Aorta (tissue), 5 donors: ENCODE measurements at regions of chr2 and their contacts with region 1.

Region 1: DNA sequence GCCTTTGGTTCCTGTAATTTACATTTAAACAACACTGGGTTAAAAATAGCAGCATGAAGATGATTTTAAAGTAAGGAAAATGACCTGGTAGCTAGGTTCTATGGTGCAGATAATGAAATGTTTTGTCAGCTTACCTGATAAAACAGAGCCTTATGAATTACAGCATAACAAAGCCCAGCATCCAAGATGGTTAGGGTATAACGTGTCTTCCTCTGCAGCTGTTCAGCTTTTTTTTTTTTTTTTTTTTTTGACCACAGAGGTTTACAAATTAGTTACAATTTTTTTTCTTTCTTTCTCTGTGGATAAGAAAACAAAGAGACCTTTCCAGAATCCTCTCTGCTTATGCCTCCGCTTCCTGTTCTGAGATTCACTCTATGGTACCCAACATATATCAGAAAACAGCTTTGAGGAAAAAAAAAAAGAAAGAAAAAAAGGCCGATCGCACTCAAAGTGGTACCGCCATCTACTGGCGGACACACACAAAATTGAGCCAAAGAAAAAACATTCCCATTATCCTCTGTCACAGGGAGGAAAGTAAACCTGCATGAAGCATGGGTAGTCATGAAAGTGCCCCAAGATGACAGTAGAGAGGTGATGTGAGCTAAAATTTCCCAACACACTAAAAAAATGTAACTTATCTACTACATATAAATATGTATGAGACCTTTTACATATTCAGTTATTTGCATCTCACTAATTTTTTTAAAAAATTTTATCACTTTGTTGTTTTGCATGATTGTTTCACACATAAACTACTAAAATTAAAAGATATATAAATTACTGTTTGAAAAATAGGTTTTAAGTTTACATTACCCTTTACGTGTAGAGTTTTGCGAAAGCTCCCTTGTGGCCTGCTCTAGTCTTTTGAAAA is at the start of gene SCN3A:
- DNase-seq: no peak
- ATAC-seq: no peak
- H3K4me3 ChIP-seq: peak within 1 kb of the TSS in 1 of 2 donors; percentile 14
- H3K27ac ChIP-seq: no peak within 1 kb of the TSS
- H3K4me1 ChIP-seq: no peaks in the 10 kb centered on the region
- H3K27me3 ChIP-seq: no peaks in the 10 kb centered on the region
- total RNA-seq, gene SCN3A: 2.4 to 19.3 TPM

Region 2: GRCh38 chr2:163338270-163338669 is 1865.7 kb before region 1 on chr2:
- intact Hi-C with region 1: no loop called
- DNase-seq: no peak
- ATAC-seq: no peak
- H3K4me3 ChIP-seq: no peak overlapping the region
- H3K27ac ChIP-seq: no peak overlapping the region
- H3K4me1 ChIP-seq: no peaks in the 10 kb centered on the region
- H3K27me3 ChIP-seq: no peaks in the 10 kb centered on the region

Region 3: DNA sequence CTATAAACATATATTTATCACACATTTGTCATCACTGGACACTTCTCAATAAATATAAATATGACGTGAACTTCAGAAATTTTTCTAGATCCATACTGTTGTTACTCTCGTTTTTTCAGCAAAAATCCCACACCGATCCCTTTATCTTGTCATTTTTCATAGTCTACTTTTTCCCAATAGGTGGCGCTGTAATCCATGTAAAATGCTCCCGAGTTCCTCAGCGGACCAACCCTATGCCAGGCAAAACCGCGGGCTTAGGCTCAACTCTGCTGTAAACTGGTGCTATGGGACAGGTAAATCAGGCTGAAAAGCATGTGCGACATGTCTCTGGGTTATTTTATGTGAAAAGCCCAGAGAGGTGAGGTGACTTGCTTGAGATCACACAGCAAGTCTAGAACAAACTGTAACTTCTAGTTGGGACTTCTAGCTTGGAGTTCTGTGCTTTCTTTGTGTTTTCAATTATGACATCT is 466.3 kb before region 1 on chr2:
- intact Hi-C with region 1: loop called in 1 of 2 experiments (anchors 10 kb)
- DNase-seq: peak in 1 of 2 donors; percentile 55
- ATAC-seq: peak; percentile 87
- H3K4me3 ChIP-seq: peak overlapping the region in 1 of 2 donors; percentile 26
- H3K27ac ChIP-seq: no peak overlapping the region
- H3K4me1 ChIP-seq: peaks cover 0 to 4% of the 10 kb centered on the region in 2 donors
- H3K27me3 ChIP-seq: no peaks in the 10 kb centered on the region

Region 4: DNA sequence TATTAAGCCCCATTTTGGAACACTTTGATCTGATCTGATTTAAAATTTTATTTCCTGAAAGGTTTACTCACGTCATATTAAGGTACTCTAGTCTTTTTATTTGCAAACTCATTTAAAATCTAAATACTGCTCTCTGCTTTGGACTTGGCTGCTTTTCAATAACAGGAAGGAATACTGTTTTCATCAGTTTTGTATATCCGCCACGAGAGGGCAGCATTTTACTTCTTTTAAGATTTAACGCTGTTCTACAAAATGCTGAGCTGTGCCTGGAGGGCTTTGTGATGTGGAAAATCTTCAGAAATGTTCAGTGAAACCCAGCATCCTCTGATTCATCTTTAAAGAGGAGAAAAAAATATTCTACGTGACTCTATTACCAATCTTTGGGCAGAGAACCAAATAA is 211.1 kb before region 1 on chr2:
- intact Hi-C with region 1: loop called in 1 of 2 experiments (anchors 5 kb)
- DNase-seq: peak in 1 of 2 donors; percentile 45
- ATAC-seq: peak; percentile 75
- H3K4me3 ChIP-seq: no peak overlapping the region
- H3K27ac ChIP-seq: no peak overlapping the region
- H3K4me1 ChIP-seq: peaks cover 0 to 3% of the 10 kb centered on the region in 2 donors
- H3K27me3 ChIP-seq: no peaks in the 10 kb centered on the region

Region 5: GRCh38 chr2:165015052-165015642 is 188.8 kb before region 1 on chr2:
- intact Hi-C with region 1: loop called (anchors 5 kb)
- DNase-seq: peak; percentile 59 to 85
- ATAC-seq: peak; percentile 61
- H3K4me3 ChIP-seq: no peak overlapping the region
- H3K27ac ChIP-seq: no peak overlapping the region
- H3K4me1 ChIP-seq: no peaks in the 10 kb centered on the region
- H3K27me3 ChIP-seq: no peaks in the 10 kb centered on the region

Region 6: DNA sequence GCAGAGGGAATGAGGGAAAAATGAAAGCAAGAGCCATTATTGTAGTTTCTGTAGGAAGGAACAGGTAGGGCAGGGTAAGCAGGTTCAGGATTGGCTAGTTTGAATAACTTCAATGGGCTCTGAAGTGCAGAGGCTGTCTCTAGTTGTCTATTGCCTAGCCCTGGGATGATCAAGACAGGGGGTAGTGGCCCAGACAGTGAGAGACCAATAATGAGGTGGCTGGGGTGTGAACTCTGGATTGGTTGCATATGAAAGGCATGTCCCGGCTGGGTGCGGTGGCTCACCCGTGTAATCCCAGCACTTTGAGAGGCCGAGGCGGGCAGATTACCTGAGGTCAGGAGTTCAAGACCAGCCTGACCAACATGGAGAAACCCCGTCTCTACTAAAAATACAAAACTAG is 181.1 kb before region 1 on chr2:
- intact Hi-C with region 1: loop called (anchors 5 kb)
- DNase-seq: no peak
- ATAC-seq: no peak
- H3K4me3 ChIP-seq: no peak overlapping the region
- H3K27ac ChIP-seq: no peak overlapping the region
- H3K4me1 ChIP-seq: no peaks in the 10 kb centered on the region
- H3K27me3 ChIP-seq: no peaks in the 10 kb centered on the region

Region 7: GRCh38 chr2:165328272-165328671 is 124.3 kb after region 1 on chr2:
- intact Hi-C with region 1: no loop called
- DNase-seq: no peak
- ATAC-seq: no peak
- H3K4me3 ChIP-seq: no peak overlapping the region
- H3K27ac ChIP-seq: no peak overlapping the region
- H3K4me1 ChIP-seq: no peaks in the 10 kb centered on the region
- H3K27me3 ChIP-seq: no peaks in the 10 kb centered on the region